Activated CD4-positive, alpha-beta T cell treated with anti-CD3 and anti-CD28 coated beads for 36 hours (primary cell): ENCODE measurements at regions of chr14 and their contacts with region 1.

Region 1: DNA sequence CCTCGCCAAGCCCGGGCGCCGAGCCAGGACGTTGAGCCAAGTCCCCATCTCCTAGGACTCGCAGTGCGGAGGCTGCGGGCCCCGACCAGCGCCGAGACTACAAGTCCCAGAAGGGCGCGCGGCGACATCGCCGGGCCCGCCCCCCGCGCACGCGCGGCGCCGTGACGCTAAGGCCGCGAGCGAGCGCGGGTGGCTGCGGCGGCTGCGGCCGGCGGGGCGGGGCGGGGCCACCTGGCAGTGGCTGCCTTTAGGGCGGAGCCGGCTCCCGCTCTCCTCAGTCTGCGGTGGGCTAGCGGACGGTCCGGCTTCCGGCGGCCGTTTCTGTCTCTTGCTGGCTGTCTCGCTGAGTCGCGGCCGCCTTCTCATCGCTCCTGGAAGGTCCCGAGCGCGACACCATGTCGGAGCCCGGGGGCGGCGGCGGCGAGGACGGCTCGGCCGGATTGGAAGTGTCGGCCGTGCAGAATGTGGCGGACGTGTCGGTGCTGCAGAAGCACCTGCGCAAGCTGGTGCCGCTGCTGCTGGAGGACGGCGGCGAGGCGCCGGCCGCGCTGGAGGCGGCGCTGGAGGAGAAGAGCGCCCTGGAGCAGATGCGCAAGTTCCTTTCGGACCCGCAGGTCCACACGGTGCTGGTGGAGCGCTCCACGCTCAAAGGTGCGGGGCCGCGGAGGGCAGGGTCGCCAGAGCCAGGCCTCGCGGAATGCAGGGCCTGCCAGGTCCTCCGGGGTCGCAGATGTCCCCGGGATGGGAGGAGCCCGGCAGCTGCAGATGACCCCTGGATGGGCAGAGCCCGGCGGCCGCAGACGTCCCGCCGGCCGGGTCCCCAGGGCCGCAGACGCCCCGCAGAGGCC is at the start of gene DYNC1H1:
- DNase-seq: peak; percentile 93
- ATAC-seq: peak; percentile 82
- H3K4me3 Mint-ChIP-seq: peak within 1 kb of the TSS; percentile 89
- H3K27ac Mint-ChIP-seq: peak within 1 kb of the TSS; percentile 91
- H3K4me1 Mint-ChIP-seq: peaks cover 39% of the 10 kb centered on the region
- H3K27me3 Mint-ChIP-seq: no peaks in the 10 kb centered on the region
- total RNA-seq, gene DYNC1H1: 283 to 293 TPM

Region 2: DNA sequence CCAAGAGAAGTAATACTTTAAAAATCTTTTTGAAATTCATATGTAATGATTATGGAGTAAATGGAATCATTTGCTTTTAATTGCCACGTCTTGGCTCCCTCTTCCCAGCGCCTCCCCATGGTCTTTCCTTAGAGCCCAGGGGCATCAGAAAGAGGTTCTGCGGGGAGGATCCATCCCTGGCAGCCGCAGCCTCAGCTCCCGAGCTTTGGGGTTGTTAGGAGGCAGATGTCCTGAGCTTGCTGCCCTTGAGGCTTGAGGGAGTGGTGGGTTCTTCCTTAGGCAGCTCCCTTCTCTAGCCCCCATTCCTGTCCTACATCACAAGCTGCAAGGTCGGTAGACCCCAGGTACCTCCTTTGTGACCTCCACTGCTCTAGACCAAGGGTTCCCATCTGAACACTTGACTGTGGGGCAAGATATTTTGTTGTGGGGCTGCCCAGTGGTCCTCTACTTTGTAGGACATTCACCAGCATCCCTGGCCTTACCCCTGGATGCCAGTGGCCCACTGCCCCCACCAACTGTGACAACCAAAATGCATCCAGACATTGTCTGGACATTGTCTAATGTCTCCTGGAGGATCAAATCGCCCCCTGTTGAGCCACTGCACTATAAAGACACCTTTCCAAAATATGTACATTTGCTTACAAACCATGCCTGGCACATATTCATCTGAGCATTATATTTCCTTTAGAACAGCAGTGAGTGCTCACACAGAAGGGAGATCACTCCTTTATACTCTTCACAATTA is 196.7 kb before region 1 on chr14:
- CTCF ChIA-PET with region 1: interaction called, 5 read pairs
- POLR2A ChIA-PET with region 1: no interaction called
- intact Hi-C with region 1: loop called in 1 of 2 experiments (anchors 2 kb)
- DNase-seq: no peak
- ATAC-seq: no peak
- H3K4me3 Mint-ChIP-seq: no peak overlapping the region
- H3K27ac Mint-ChIP-seq: no peak overlapping the region
- H3K4me1 Mint-ChIP-seq: peaks cover 42% of the 10 kb centered on the region
- H3K27me3 Mint-ChIP-seq: no peaks in the 10 kb centered on the region

Region 3: DNA sequence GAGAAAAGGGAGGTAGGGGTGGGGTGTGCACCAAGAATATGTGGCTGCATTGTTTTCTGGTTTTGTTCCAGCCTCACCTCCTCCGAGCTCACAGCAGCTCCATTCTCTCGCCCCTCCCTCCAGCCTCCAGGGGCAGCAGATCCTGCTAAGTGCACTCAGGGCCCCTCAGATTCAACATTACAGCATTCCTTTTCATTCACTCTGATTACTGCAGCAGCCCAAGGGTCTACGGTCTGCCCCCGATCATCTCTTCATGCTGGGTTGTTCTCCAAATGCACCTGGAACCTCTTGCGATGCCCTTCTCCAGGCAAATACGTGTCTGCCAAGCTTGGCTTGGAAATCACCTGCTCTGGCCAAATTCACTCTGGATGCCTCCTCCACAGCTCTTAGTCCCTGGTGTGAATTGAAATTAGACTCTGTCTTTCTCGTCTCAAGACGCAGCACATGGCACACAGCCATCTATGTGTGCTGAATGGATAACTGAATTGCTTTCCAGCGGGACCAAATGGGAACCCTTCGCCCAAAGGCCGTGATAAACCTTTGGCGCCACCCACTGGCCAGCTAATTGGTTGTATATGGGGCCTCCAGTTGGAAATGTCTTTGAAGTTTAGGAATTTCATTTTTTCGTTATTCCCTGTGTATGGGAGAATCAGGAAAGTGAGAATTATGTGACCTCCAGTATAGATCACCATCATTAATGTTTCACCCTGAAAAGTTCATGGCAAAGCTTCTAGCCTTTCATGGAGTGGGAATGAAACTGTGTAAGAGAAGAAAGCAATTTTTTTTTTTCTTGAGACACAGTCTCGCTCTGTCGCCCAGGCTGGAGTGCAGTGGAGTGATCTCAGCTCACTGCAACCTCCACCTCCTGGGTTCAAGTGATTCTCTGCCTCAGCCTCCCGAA is 131.9 kb after region 1 on chr14:
- CTCF ChIA-PET with region 1: interaction called, 9 read pairs
- POLR2A ChIA-PET with region 1: interaction called, 7 read pairs
- intact Hi-C with region 1: loop called (anchors 1 kb)
- DNase-seq: peak; percentile 82
- ATAC-seq: peak; percentile 57
- H3K4me3 Mint-ChIP-seq: no peak overlapping the region
- H3K27ac Mint-ChIP-seq: peak overlapping the region; percentile 51
- H3K4me1 Mint-ChIP-seq: peaks cover 22% of the 10 kb centered on the region
- H3K27me3 Mint-ChIP-seq: no peaks in the 10 kb centered on the region

Region 4: DNA sequence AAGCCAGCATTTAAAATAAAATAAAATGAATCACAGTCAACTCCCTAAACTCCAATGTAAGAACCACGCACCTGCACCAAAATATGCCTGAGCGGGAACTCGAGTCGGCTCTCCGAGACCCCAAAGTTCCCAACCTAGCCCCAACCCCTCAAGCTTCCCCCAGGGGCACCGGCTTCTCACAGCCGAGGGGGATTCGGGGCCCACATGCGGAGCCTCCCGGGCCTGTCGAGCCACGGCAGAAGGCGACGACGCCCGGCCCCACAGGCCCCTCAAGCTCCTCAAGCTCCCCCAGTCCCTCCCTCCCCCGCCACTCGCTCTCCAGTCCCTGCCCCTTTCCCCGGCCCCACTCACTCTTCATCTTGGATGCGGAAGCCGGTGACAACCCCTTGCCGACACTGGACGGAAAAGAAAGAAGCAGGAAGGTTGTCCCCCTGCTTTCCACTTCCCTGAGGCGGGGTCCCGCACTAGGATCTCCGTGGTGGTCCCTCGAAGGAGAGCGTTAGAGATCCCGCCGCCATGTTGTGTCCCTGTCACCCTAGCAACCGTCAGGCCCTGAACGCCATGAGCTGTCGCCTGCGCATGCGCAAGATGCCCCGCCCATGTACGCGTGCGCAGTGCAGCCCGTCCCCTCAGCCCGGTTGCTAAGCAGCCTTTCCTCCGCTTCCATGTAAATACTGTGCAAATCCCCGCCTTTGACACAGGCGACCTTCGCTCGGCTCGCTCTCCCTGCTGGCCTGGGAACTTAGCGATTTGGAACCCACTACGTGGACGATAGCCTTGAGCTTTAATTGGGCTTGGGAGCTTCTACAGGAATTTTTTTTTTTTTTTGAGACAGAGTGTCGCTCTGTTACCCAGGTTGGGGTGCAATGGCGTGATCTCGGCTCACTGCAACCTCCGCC is 340.3 kb after region 1 on chr14 and contains the start of gene MOK:
- CTCF ChIA-PET with region 1: no interaction called
- POLR2A ChIA-PET with region 1: no interaction called
- intact Hi-C with region 1: loop called in 1 of 2 experiments (anchors 1 kb)
- DNase-seq: peak; percentile 97
- ATAC-seq: peak; percentile 98
- H3K4me3 Mint-ChIP-seq: peak within 1 kb of the TSS; percentile 93
- H3K27ac Mint-ChIP-seq: peak within 1 kb of the TSS; percentile 60
- H3K4me1 Mint-ChIP-seq: peaks cover 5% of the 10 kb centered on the region
- H3K27me3 Mint-ChIP-seq: no peaks in the 10 kb centered on the region
- total RNA-seq, gene MOK: 6.5 to 6.6 TPM